OCI-LY7 (cell line): ENCODE measurements at regions of chr12 and their contacts with region 1.

Region 1: GRCh38 chr12:90305379-90305778 is 596.7 kb upstream of the ATP2B1 start:
- DNase-seq: no peak
- H3K4me3 ChIP-seq: no peak overlapping the region
- H3K27ac ChIP-seq: no peak overlapping the region
- H3K4me1 ChIP-seq: no peaks in the 10 kb centered on the region
- CTCF ChIP-seq: no peak

Region 2: DNA sequence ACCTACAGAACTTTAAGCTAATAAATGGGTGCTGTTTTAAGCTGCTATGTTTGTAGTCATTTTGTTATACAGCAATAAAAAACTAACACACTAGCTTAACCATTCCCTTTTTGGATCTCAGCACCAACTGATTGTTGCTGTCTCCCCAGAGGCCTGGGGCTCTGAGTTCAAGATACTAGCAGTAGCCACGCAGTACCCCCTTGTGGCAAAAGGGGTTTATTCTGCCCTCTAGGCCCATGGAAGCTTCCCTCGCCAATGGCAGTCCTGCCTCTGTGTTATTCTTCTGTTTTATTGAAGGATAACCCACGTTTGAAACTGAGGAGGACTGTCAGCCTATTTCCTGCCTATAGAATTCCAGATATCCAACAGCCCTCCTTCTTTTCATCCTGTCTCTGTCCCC is 141.4 kb before region 1 on chr12:
- CTCF ChIA-PET with region 1: no interaction called
- POLR2A ChIA-PET with region 1: no interaction called
- intact Hi-C with region 1: no loop called
- DNase-seq: peak; percentile 37
- H3K4me3 ChIP-seq: no peak overlapping the region
- H3K27ac ChIP-seq: no peak overlapping the region
- H3K4me1 ChIP-seq: no peaks in the 10 kb centered on the region
- CTCF ChIP-seq: peak; percentile 66

Region 3: DNA sequence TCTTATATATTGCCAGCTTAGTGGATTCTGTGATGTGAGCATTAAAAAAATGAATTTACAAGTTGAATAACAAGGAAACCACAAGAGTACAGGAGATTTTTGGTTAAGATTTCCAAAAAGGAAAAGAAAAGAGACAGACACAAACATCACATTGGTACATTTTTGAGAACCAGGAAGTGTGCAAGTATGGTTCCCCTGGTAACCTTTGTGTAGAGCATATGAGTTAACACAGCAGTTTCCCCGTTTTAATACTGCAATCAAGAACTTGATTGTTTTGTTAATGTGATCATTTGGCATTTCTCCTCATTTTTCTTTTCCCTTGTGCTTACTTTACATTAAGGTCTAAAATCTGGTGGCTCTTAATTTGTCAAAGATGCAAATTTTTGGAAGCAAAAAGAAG is 106.4 kb before region 1 on chr12:
- CTCF ChIA-PET with region 1: no interaction called
- POLR2A ChIA-PET with region 1: no interaction called
- intact Hi-C with region 1: no loop called
- DNase-seq: no peak
- H3K4me3 ChIP-seq: no peak overlapping the region
- H3K27ac ChIP-seq: no peak overlapping the region
- H3K4me1 ChIP-seq: no peaks in the 10 kb centered on the region
- CTCF ChIP-seq: no peak

Region 4: DNA sequence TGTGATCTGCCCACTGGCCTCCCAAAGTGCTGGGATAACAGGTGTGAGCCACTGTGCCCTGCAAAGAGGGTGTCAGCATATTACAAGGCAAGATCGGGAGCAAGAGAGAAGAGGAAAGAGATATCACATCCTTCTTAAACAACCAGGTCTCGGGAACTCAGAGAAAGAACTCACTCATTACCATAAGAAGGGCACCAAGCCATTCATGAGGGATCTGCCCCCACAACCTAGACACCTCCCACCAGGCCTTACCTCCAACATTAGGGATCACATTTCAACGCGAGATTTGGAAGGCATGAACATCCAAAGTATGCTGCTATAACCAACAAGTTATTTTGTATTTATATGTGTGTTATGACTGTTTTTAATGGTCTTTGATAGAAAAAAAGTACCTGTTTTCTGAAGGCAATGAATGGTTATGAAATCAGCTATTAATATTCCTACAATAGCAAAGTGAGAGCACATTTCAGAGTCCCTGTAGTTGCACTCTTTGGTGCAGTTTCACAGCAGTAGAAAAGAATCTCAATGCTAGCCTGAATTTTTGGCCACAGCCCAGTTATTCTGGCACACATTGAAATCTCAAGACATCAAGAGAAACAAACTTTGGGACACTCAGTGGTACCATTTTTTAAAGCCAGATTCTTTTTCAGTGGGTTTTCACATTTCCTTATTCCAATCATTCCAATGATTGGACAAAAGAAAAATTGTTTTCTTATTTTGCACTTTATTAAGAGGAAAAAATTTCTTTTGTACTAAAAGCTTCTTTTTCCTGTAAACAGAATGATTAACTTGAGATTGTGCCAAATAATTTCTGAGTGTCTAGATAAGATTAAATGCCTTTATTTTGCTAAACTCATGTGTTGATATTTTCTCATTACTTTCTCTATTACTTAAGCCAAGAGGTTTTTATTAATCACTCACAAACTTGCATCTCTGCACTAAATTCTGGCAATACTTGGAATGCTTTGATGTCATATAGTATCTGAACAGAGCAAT is 14.1 kb before region 1 on chr12:
- CTCF ChIA-PET with region 1: no interaction called
- POLR2A ChIA-PET with region 1: interaction called, 13 read pairs
- intact Hi-C with region 1: no loop called
- DNase-seq: no peak
- H3K4me3 ChIP-seq: no peak overlapping the region
- H3K27ac ChIP-seq: no peak overlapping the region
- H3K4me1 ChIP-seq: no peaks in the 10 kb centered on the region
- CTCF ChIP-seq: no peak